Calu3 (cell line): ENCODE measurements at regions of chr1 and their contacts with region 1.

Region 1: GRCh38 chr1:221594576-221594975 is 147.3 kb downstream of the DUSP10 start:
- DNase-seq: no peak
- H3K4me3 Mint-ChIP-seq: no peak overlapping the region
- H3K27ac Mint-ChIP-seq: no peak overlapping the region
- H3K4me1 Mint-ChIP-seq: no peaks in the 10 kb centered on the region
- H3K27me3 Mint-ChIP-seq: no peaks in the 10 kb centered on the region
- CTCF ChIP-seq: no peak

Region 2: GRCh38 chr1:221435504-221435904 is 159.1 kb before region 1 on chr1:
- CTCF ChIA-PET with region 1: no interaction called
- intact Hi-C with region 1: no loop called
- DNase-seq: no peak
- H3K4me3 Mint-ChIP-seq: no peak overlapping the region
- H3K27ac Mint-ChIP-seq: no peak overlapping the region
- H3K4me1 Mint-ChIP-seq: peaks cover 20% of the 10 kb centered on the region
- H3K27me3 Mint-ChIP-seq: no peaks in the 10 kb centered on the region
- CTCF ChIP-seq: peak; percentile 89

Region 3: DNA sequence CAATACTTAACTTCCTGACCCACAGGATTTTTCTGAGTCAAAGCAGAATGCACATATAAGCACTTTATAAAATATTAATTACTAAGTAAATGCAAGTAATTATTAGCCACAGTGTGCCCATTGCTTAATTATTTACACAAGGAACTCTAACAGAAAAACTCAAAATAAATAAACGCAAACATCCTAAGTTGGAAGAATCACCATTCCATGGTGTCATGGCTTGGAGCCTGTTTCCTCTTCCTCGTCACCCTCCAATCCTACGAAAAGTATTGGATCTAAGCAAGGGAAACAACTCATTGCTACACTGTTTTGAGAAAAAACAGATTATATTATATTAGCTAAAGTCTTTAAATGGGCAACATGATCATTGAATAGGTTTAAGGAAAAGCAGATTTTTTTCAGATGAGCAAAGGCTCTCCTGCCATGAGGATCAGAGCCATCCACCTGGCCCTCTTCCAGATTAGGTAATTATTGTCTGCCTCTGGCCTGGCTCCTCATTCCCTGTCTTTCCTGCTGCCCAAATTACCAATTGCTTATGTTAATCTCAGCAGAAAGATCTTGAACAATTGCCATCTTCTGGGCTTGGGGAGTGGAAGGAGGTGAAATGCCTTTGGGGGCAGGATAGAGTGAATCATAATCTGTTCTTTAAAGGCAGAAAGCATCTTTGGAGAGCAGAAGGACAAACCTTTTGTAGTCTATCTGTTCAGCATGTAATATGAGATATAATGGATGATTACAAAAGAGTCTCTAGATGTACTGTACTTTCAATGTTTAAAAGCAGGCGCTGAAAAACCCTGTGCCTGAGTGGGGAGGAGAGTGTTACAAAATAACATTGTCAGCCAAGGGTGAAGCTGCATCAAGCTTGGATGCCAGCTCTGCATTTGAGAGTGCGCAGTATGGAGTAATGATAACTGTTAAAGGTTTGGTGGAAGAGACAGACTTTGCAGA is 26.1 kb after region 1 on chr1:
- CTCF ChIA-PET with region 1: no interaction called
- intact Hi-C with region 1: loop called (anchors 1 kb)
- DNase-seq: peak; percentile 11
- H3K4me3 Mint-ChIP-seq: no peak overlapping the region
- H3K27ac Mint-ChIP-seq: no peak overlapping the region
- H3K4me1 Mint-ChIP-seq: no peaks in the 10 kb centered on the region
- H3K27me3 Mint-ChIP-seq: no peaks in the 10 kb centered on the region
- CTCF ChIP-seq: no peak

Region 4: GRCh38 chr1:222124602-222125001 is 530.0 kb after region 1 on chr1:
- CTCF ChIA-PET with region 1: no interaction called
- intact Hi-C with region 1: no loop called
- DNase-seq: no peak
- H3K4me3 Mint-ChIP-seq: no peak overlapping the region
- H3K27ac Mint-ChIP-seq: no peak overlapping the region
- H3K4me1 Mint-ChIP-seq: peaks cover 24% of the 10 kb centered on the region
- H3K27me3 Mint-ChIP-seq: no peaks in the 10 kb centered on the region
- CTCF ChIP-seq: no peak